ENCODE measurements at regions of chr16 and their contacts with region 1.

Region 1: GRCh38 chr16:20741554-20742285 is at the start of gene THUMPD1:
- DNase-seq: peak; percentile 99
- H3K4me3 Mint-ChIP-seq: peak within 1 kb of the TSS; percentile 91
- H3K27ac Mint-ChIP-seq: peak within 1 kb of the TSS; percentile 95
- H3K4me1 Mint-ChIP-seq: peaks cover 26% of the 10 kb centered on the region
- H3K27me3 Mint-ChIP-seq: no peaks in the 10 kb centered on the region
- total RNA-seq, gene THUMPD1: 45.1 to 45.2 TPM

Region 2: GRCh38 chr16:20637247-20637646 is 104.5 kb before region 1 on chr16:
- CTCF ChIA-PET with region 1: no interaction called
- POLR2A ChIA-PET with region 1: no interaction called
- DNase-seq: no peak
- H3K4me3 Mint-ChIP-seq: no peak overlapping the region
- H3K27ac Mint-ChIP-seq: no peak overlapping the region
- H3K4me1 Mint-ChIP-seq: no peaks in the 10 kb centered on the region
- H3K27me3 Mint-ChIP-seq: peaks cover 2% of the 10 kb centered on the region

Region 3: GRCh38 chr16:20763461-20764232 is 21.9 kb after region 1 on chr16 and contains the start of gene ACSM3:
- CTCF ChIA-PET with region 1: interaction called, 9 read pairs
- POLR2A ChIA-PET with region 1: interaction called, 13 read pairs
- DNase-seq: peak; percentile 73
- H3K4me3 Mint-ChIP-seq: peak within 1 kb of the TSS; percentile 83
- H3K27ac Mint-ChIP-seq: peak within 1 kb of the TSS; percentile 81
- H3K4me1 Mint-ChIP-seq: peaks cover 23% of the 10 kb centered on the region
- H3K27me3 Mint-ChIP-seq: no peaks in the 10 kb centered on the region
- total RNA-seq, gene ACSM3: 3.6 to 4.3 TPM

Region 4: GRCh38 chr16:20806168-20807050 is 64.7 kb after region 1 on chr16 and contains the starts of genes ERI2 and REXO5:
- CTCF ChIA-PET with region 1: interaction called, 7 read pairs
- POLR2A ChIA-PET with region 1: interaction called, 14 read pairs
- DNase-seq: peak; percentile 79
- H3K4me3 Mint-ChIP-seq: peak within 1 kb of the TSS; percentile 97
- H3K27ac Mint-ChIP-seq: peak within 1 kb of the TSS; percentile 93
- H3K4me1 Mint-ChIP-seq: peaks cover 51% of the 10 kb centered on the region
- H3K27me3 Mint-ChIP-seq: no peaks in the 10 kb centered on the region
- total RNA-seq, gene ERI2: 12.4 to 13.2 TPM
- total RNA-seq, gene REXO5: 16.2 to 17.4 TPM

Measured in activated CD4-positive, alpha-beta memory T cell treated with anti-CD3 and anti-CD28 coated beads, Interleukin-2, amount 10 ng/mL, durations not matched to agents 7 days and 5 days (primary cell).